ENCODE measurements at regions of chr10 and their contacts with region 1.

Region 1: GRCh38 chr10:6202684-6203330 is at the start of gene PFKFB3:
- DNase-seq: peak; percentile 91
- H3K4me3 Mint-ChIP-seq: peak within 1 kb of the TSS; percentile 98
- H3K27ac Mint-ChIP-seq: peak within 1 kb of the TSS; percentile 96
- H3K4me1 Mint-ChIP-seq: peaks cover 42% of the 10 kb centered on the region
- H3K27me3 Mint-ChIP-seq: no peaks in the 10 kb centered on the region
- total RNA-seq, gene PFKFB3: 77.1 to 82.2 TPM

Region 2: DNA sequence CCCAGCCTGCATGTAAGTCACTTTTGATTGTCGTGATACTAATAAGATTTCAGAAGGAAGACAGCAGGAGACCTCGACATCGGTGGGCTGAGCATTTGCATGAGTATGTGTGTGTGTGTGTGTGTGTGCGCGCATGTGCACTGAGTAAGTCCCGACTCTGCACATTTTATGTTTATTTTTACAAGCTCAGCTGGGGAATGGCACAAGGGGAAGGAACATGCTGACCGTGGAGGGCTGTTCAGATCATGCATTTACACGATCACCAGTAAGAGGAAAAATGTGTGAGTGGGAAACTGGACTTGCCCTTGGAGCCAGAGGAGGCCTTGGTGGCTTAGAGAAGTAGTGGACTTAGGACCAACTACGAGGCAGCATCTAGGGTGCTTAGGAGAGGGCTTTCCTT is 182.0 kb before region 1 on chr10:
- CTCF ChIA-PET with region 1: no interaction called
- POLR2A ChIA-PET with region 1: no interaction called
- DNase-seq: peak; percentile 1
- H3K4me3 Mint-ChIP-seq: no peak overlapping the region
- H3K27ac Mint-ChIP-seq: peak overlapping the region; percentile 16
- H3K4me1 Mint-ChIP-seq: peaks cover 42% of the 10 kb centered on the region
- H3K27me3 Mint-ChIP-seq: no peaks in the 10 kb centered on the region

Region 3: DNA sequence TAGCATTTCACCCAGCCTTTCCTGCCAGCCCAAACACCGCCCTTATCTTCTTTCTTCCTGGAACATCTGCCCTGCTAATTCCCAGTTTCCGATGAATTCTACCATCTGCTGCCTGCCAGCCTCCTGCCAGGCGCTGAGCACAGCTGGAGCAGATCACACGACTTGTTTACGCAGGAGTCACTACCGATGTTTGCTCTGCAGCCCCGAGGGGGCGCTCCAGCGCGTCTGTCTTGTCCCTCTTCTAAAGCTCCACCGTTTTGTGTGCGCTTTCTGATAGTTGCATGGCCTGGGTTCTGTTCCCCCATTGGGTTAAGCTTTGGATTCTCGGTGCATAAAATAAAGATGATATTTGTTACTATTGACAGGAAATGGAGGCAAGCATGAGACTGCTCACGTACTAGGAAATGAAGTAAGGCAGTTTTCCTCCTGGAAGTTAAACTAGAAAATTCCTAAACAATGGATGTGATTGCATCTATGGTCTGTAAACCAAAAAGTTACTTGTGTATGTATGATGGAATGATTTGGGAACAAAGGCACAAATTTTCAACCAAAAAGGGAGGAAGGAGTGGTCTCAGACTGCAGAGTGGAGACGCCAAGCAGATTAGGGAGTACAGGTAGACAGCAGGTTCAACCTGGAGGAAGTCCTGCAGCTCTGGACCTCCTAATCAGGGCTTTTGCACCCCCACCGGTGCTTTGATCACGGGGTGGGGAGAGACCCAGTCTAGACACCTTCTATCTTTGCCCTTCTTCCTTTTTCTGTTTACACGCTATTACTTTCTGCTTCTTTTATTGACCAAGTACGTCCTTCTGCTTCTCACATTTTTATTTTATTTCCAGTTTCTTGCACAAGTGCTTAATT is 116.2 kb before region 1 on chr10:
- CTCF ChIA-PET with region 1: interaction called, 11 read pairs
- POLR2A ChIA-PET with region 1: no interaction called
- DNase-seq: peak; percentile 91
- H3K4me3 Mint-ChIP-seq: peak overlapping the region; percentile 45
- H3K27ac Mint-ChIP-seq: peak overlapping the region; percentile 84
- H3K4me1 Mint-ChIP-seq: peaks cover 81% of the 10 kb centered on the region
- H3K27me3 Mint-ChIP-seq: no peaks in the 10 kb centered on the region

Region 4: GRCh38 chr10:6171881-6172695 is 30.7 kb before region 1 on chr10:
- CTCF ChIA-PET with region 1: interaction called, 29 read pairs
- POLR2A ChIA-PET with region 1: interaction called, 6 read pairs
- DNase-seq: no peak
- H3K4me3 Mint-ChIP-seq: peak overlapping the region; percentile 45
- H3K27ac Mint-ChIP-seq: peak overlapping the region; percentile 83
- H3K4me1 Mint-ChIP-seq: peaks cover 90% of the 10 kb centered on the region
- H3K27me3 Mint-ChIP-seq: no peaks in the 10 kb centered on the region

Region 5: GRCh38 chr10:6269953-6270867 is 67.4 kb after region 1 on chr10:
- CTCF ChIA-PET with region 1: interaction called, 12 read pairs
- POLR2A ChIA-PET with region 1: no interaction called
- DNase-seq: peak; percentile 81
- H3K4me3 Mint-ChIP-seq: peak overlapping the region; percentile 30
- H3K27ac Mint-ChIP-seq: peak overlapping the region; percentile 95
- H3K4me1 Mint-ChIP-seq: peaks cover 72% of the 10 kb centered on the region
- H3K27me3 Mint-ChIP-seq: no peaks in the 10 kb centered on the region

Region 6: DNA sequence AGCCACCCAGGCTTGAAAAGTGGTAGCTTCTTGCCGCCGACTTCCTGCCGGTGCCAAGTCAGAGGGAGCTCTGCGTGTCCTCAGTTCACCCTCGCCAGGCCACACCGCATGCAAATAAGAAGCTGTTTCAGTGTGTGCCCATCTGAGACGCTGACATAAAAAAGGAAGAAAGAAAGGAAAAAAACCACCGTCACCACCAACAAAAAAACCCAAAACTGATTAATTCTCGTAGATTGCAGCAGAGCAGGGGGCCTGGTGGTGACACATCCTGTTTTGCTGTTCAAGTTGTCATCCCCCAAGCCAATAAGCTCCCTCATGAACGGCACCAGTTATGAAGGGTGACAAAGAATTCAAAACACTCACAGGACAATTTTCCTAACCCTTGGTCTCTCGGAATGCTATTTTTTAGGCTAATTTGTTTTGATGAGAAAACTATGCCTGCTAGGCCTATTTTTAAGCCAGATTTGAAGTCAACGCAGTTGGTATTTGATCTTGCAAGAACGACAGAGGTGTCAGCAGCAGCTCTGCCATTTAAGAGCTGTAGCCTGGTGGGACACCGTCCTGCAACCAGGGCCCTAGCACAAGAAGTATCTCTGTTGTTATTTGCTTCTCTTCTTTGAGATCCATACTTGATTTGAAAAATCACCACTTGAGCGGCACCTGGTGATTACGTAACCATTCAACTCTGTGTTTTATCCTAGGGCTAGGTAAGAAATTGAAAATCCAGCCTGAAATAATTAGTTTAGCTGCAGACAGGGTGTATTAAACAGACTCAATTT is 145.5 kb after region 1 on chr10:
- CTCF ChIA-PET with region 1: interaction called, 10 read pairs
- POLR2A ChIA-PET with region 1: no interaction called
- DNase-seq: peak; percentile 92
- H3K4me3 Mint-ChIP-seq: peak overlapping the region; percentile 66
- H3K27ac Mint-ChIP-seq: peak overlapping the region; percentile 98
- H3K4me1 Mint-ChIP-seq: peaks cover 67% of the 10 kb centered on the region
- H3K27me3 Mint-ChIP-seq: no peaks in the 10 kb centered on the region

Region 7: DNA sequence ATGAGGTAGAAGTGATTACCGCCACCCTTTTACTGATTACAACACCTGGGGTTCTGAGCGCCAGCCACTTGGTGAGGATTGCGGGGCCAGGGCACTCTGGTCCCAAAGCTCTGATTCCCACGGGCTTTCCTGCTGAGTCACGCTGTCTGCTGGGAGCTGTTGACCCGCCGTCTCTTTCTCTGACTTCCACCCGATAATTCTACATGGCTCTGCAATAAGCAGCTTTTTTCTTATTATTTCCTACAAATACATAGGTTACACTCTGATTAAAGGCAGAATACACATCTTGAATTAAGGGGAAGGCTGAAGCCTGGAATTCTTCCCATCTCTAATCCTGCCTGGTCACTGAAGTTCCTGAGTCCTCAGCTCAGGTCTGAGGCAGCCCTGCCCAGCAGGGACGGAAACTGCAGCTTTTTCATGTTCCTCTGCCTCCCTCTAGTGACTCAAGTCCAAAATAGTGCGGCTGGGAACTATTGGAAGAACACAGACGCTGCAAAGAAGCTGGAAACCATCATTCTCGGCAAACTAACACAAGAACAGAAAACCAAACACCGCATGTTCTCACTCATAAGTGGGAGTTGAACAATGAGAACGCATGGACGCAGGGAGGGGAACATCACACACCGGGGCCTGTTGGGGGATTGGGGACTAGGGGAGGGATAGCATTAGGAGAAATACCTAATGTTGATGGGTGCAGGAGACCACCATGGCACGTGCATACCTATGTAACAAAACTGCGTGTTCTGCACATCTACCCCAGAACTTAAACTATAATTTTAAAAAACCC is 198.9 kb after region 1 on chr10:
- CTCF ChIA-PET with region 1: interaction called, 73 read pairs
- POLR2A ChIA-PET with region 1: interaction called, 4 read pairs
- DNase-seq: peak; percentile 75
- H3K4me3 Mint-ChIP-seq: peak overlapping the region; percentile 2
- H3K27ac Mint-ChIP-seq: peak overlapping the region; percentile 3
- H3K4me1 Mint-ChIP-seq: peaks cover 47% of the 10 kb centered on the region
- H3K27me3 Mint-ChIP-seq: peaks cover 8% of the 10 kb centered on the region